MCF 10A (cell line): ENCODE measurements at regions of chr2 and their contacts with region 1.

Region 1: GRCh38 chr2:177314194-177314593 is 49.7 kb upstream of the NFE2L2 start:
- DNase-seq: peak; percentile 67
- H3K4me3 Mint-ChIP-seq: no peak overlapping the region
- H3K27ac Mint-ChIP-seq: peak overlapping the region; percentile 95
- H3K4me1 Mint-ChIP-seq: peaks cover 30% of the 10 kb centered on the region
- H3K27me3 Mint-ChIP-seq: no peaks in the 10 kb centered on the region
- CTCF ChIP-seq: no peak

Region 2: DNA sequence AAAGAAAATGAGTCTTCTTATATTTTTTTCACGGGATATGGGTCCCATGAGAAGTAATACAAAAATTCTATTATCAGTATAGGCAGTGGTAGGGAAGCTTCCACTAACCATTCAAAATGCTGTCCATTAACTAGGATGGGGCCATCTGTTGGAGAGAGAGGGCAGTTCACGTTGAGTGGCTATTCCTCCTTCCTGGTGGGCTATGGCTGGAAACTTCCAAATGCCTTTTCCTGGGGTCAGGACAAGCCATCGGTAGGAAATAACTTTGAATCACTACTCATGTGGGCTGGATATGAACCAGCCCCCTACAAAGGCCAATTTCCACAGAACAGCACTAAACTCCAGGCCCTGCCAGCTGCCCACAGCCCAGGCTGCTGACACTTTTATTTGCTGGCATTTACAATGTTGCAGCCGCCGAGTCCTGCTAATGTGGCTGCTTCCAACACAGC is 257.7 kb before region 1 on chr2:
- CTCF ChIA-PET with region 1: no interaction called
- POLR2A ChIA-PET with region 1: no interaction called
- intact Hi-C with region 1: no loop called
- DNase-seq: no peak
- H3K4me3 Mint-ChIP-seq: no peak overlapping the region
- H3K27ac Mint-ChIP-seq: no peak overlapping the region
- H3K4me1 Mint-ChIP-seq: peaks cover 10% of the 10 kb centered on the region
- H3K27me3 Mint-ChIP-seq: no peaks in the 10 kb centered on the region
- CTCF ChIP-seq: no peak

Region 3: DNA sequence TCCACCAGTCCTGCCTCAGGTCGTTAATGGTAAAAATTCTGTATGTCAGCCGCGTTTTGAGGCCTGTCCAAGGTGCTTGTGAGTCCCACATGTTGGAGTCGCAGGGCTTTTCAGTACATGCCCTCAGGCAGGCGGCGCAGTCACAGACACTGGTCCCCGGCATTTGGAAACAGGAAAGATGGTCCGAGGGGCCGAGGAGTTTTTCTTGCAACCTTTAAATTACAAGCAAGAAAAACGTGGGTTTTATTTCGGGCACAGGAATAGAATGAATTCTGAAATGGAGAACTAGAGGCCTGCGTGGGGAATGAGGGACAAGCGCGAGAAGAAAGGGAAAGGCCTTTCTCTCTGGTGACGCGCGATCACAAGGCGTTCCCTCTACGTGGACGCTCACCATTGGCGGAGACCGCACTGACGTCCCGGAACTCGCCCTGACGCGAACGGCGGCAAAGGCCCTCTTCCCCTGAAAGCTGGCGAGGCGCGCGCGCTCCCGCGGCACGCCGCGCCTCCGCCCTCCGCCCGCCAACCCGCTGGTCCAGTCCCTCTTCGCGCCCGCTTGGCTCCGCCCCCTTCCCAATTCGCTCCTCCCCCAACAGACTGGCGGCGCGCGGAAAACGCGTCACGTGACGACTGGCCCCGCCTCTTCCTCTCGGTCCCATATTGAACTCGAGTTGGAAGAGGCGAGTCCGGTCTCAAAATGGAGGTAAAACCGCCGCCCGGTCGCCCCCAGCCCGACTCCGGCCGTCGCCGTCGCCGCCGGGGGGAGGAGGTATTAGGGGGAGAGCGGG is 101.9 kb before region 1 on chr2 and contains the start of gene HNRNPA3:
- CTCF ChIA-PET with region 1: no interaction called
- POLR2A ChIA-PET with region 1: interaction called, 17 read pairs
- intact Hi-C with region 1: no loop called
- DNase-seq: peak; percentile 98
- H3K4me3 Mint-ChIP-seq: peak within 1 kb of the TSS; percentile 91
- H3K27ac Mint-ChIP-seq: peak within 1 kb of the TSS; percentile 100
- H3K4me1 Mint-ChIP-seq: peaks cover 13% of the 10 kb centered on the region
- H3K27me3 Mint-ChIP-seq: no peaks in the 10 kb centered on the region
- CTCF ChIP-seq: no peak
- total RNA-seq, gene HNRNPA3: 142 and 179 TPM in 2 replicates

Region 4: DNA sequence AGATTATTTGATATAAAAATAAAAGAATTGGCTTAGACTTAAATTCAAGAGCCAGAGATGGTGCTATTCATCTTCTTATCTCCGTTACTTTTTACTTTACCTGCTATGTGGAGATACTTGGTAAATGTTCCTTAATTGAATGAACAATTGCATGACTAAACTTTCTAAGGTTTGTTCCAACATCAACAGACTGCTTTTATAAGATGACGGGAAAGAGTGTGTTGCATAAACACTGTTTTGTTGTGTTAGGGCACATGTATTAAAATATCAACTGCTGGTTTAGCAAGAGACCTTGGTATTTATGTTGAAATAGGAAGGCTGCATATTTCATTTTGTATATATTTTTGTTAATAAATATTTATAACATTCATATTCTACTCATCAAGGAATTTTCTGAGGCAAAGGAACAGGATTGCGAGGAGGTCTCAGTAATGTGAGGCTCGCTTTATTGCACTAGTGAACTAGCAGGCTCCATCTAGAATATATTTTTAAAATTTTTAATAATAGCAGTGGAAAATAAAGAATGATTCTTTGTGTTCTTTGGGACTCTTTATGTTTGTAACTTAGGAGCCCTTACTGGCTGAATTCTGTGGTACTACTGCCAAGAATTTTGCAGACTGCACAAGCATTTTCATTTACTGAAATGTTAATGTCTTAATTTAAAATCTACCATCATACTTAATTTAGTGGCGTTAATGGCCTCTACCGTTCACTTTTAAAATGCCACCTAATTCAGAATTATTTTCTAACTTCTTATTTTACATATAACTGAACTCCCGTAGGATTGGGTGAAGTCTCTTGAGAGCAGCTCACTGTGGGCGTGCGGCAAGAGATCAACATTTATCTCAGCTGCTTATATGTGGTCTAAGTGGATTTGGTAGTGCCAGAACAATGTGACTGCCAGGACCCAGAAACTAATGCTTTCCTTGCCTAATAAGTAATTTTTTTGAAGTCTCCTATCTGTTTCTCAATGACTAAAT is 38.9 kb before region 1 on chr2:
- CTCF ChIA-PET with region 1: interaction called, 3 read pairs
- POLR2A ChIA-PET with region 1: interaction called, 71 read pairs
- intact Hi-C with region 1: no loop called
- DNase-seq: peak; percentile 93
- H3K4me3 Mint-ChIP-seq: peak overlapping the region; percentile 62
- H3K27ac Mint-ChIP-seq: peak overlapping the region; percentile 91
- H3K4me1 Mint-ChIP-seq: peaks cover 20% of the 10 kb centered on the region
- H3K27me3 Mint-ChIP-seq: no peaks in the 10 kb centered on the region
- CTCF ChIP-seq: no peak

Region 5: GRCh38 chr2:177296040-177296439 is 18.2 kb before region 1 on chr2:
- CTCF ChIA-PET with region 1: interaction called, 16 read pairs
- POLR2A ChIA-PET with region 1: interaction called, 6 read pairs
- intact Hi-C with region 1: no loop called
- DNase-seq: peak; percentile 42
- H3K4me3 Mint-ChIP-seq: no peak overlapping the region
- H3K27ac Mint-ChIP-seq: no peak overlapping the region
- H3K4me1 Mint-ChIP-seq: no peaks in the 10 kb centered on the region
- H3K27me3 Mint-ChIP-seq: no peaks in the 10 kb centered on the region
- CTCF ChIP-seq: peak; percentile 32

Region 6: DNA sequence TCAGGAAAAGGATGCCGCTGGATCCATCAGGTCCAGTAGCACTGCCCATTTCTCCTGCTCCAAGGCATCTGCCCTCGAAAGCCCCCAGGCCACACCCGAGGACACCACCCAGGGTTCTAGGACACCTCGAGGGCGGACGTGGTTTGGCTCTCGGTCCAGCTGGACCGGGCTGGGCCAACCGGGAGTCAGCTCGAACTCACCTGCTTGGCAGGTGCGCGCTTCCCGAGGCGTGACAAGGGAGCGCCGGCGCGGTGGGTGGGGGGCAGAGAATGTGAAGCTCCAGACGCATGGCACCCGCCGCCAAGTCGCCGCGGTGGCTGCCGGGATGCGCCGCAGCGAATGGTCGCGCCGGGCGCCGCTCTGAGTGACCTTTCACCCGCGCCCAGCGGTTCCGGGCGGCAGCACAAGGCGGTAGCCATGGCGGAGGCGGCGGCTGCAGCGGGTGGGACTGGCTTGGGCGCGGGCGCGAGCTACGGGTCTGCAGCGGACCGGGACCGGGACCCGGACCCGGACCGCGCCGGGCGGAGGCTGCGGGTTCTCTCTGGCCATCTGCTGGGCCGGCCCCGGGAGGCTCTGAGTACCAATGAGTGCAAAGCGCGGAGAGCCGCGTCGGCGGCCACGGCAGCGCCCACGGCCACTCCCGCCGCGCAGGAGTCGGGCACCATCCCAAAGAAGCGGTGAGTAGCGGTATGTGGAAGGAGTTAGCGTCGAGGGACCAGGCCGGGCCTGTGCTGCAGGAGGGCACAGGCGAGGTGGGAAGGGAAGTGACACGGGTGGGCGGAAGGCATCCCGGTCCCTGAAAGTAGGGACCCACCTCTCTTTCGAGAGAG is 78.4 kb after region 1 on chr2 and contains the start of gene AGPS:
- CTCF ChIA-PET with region 1: interaction called, 3 read pairs
- POLR2A ChIA-PET with region 1: interaction called, 12 read pairs
- intact Hi-C with region 1: no loop called
- DNase-seq: peak; percentile 71
- H3K4me3 Mint-ChIP-seq: peak within 1 kb of the TSS; percentile 96
- H3K27ac Mint-ChIP-seq: peak within 1 kb of the TSS; percentile 97
- H3K4me1 Mint-ChIP-seq: peaks cover 48% of the 10 kb centered on the region
- H3K27me3 Mint-ChIP-seq: no peaks in the 10 kb centered on the region
- CTCF ChIP-seq: peak; percentile 14
- total RNA-seq, gene AGPS: 49.5 and 50.5 TPM in 2 replicates